Activated CD8-positive, alpha-beta T cell treated with anti-CD3 and anti-CD28 coated beads for 36 hours (primary cell): ENCODE measurements at regions of chr12 and their contacts with region 1.

Region 1: DNA sequence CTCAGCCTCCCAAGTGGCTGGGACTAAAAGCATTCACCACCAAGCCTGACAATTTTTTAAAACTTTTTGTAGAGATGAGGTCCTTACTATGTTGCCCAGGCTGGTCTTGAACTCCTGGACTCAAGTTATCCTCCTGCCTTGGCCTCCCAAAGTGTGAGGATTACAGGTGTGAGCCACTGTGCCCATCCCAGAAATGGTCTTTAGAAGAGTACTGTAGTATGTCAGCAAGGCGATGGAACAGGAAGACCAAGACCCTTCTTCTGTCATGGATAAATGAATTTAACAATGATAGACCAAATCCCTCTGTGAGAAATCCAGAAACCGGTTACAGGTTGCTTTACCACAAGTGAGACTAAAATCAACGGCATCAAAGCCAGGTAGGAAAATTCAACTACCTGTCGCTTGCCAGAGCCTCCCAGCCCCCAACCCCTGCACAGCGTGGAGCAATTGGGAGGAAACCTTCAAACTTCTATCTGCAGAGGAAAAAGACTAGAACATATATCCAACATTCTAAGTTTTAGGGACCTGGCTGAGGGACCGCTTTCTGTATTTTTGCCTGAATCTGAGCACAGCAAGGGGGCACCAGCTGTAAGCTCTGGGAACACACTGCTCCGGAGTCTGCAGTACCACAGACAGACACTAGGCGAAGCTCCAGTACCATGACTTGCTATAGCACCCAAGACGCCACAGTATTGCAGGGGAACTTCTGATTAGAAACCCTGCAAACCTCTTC is 51.3 kb downstream of the CPSF6 start:
- DNase-seq: peak; percentile 91
- ATAC-seq: peak; percentile 100
- H3K4me3 Mint-ChIP-seq: no peak overlapping the region
- H3K27ac Mint-ChIP-seq: no peak overlapping the region
- H3K4me1 Mint-ChIP-seq: peaks cover 5% of the 10 kb centered on the region
- H3K27me3 Mint-ChIP-seq: peaks cover 24% of the 10 kb centered on the region
- CTCF ChIP-seq: peak; percentile 97

Region 2: DNA sequence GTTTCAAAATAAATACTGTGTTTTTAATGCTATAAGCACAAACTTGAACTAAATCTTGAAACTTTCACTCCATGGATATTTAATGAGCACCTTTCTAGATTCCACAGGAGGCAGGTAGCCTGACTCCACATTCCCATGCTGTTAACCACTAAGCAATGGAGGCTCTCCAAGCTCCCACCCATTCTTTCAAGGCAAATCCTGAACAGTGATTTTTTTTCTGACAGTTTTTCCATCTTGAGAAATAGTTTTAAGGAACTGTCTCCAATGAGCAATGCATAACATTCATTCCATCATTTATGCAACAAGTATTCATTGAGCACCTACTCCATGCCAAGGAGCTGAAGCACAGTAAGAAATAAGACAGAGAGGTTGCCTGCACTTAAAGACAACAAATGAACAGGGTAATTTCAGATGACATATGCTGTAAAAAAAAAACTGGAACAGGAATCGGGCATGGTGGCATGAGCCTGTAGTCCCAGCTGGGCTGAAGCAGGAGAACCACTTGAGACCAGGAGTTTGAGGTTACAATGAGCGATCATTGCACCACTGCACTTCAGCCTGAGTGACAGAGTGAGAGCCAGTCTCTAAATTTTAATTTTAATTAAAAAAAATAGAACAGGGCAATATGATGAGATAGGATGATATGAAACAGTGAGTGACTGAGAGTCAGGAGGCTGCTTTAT is 153.6 kb before region 1 on chr12:
- CTCF ChIA-PET with region 1: no interaction called
- POLR2A ChIA-PET with region 1: no interaction called
- intact Hi-C with region 1: no loop called
- DNase-seq: no peak
- ATAC-seq: no peak
- H3K4me3 Mint-ChIP-seq: no peak overlapping the region
- H3K27ac Mint-ChIP-seq: no peak overlapping the region
- H3K4me1 Mint-ChIP-seq: no peaks in the 10 kb centered on the region
- H3K27me3 Mint-ChIP-seq: peaks cover 13% of the 10 kb centered on the region
- CTCF ChIP-seq: no peak

Region 3: GRCh38 chr12:69266036-69266635 is 24.6 kb before region 1 on chr12:
- CTCF ChIA-PET with region 1: interaction called, 11 read pairs
- POLR2A ChIA-PET with region 1: no interaction called
- intact Hi-C with region 1: no loop called
- DNase-seq: no peak
- ATAC-seq: no peak
- H3K4me3 Mint-ChIP-seq: no peak overlapping the region
- H3K27ac Mint-ChIP-seq: no peak overlapping the region
- H3K4me1 Mint-ChIP-seq: peaks cover 16% of the 10 kb centered on the region
- H3K27me3 Mint-ChIP-seq: no peaks in the 10 kb centered on the region
- CTCF ChIP-seq: no peak

Region 4: DNA sequence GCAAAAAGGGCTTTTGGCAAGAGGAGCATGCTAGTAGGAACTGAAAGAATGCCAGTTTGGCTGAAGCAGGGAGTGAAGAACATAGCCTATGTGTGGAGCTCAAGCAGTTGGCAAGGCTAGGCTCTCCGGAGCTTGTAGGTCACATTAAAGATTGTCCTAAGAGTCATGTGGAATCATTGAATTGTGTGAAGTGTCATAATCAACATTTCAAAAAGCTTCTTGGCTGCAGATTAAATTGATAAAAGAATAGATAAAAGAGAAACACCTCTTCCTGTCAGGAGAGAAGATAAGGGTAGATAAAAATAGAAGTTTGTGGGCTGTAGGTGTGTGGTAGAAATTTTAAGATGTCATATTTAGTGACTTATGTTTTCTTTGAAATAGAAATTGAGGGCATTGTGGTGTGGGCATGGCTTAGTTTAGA is 15.2 kb before region 1 on chr12:
- CTCF ChIA-PET with region 1: interaction called, 10 read pairs
- POLR2A ChIA-PET with region 1: no interaction called
- intact Hi-C with region 1: no loop called
- DNase-seq: no peak
- ATAC-seq: peak; percentile 56
- H3K4me3 Mint-ChIP-seq: no peak overlapping the region
- H3K27ac Mint-ChIP-seq: peak overlapping the region; percentile 58
- H3K4me1 Mint-ChIP-seq: peaks cover 40% of the 10 kb centered on the region
- H3K27me3 Mint-ChIP-seq: no peaks in the 10 kb centered on the region
- CTCF ChIP-seq: no peak

Region 5: GRCh38 chr12:69500631-69501030 is 209.9 kb after region 1 on chr12:
- CTCF ChIA-PET with region 1: no interaction called
- POLR2A ChIA-PET with region 1: no interaction called
- intact Hi-C with region 1: no loop called
- DNase-seq: no peak
- ATAC-seq: no peak
- H3K4me3 Mint-ChIP-seq: no peak overlapping the region
- H3K27ac Mint-ChIP-seq: no peak overlapping the region
- H3K4me1 Mint-ChIP-seq: peaks cover 51% of the 10 kb centered on the region
- H3K27me3 Mint-ChIP-seq: no peaks in the 10 kb centered on the region
- CTCF ChIP-seq: no peak